SK-N-SH (cell line): ENCODE measurements at regions of chr1 and their contacts with region 1.

Region 1: DNA sequence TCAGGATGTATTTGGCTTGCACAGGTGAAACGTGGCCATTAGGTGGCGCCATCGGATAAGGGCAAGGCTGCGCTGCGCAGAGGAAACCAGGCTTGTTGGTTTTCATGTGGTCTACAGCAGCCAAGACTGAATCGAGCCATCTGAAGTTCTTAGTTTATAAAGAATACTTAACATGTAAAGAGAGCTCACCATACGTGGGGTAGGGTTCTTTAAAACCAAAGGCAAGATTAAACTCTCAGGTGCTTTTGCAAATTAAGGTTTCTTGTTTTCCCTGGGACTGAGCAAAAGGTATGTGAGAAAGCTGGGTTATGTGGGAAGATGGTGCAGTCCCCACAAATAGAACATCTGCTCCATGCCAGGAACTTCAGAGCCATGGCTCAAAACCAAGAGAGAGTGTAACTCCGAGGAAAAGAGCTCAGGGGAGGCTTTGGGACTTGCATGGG is 9.3 kb downstream of the MASP2 start:
- DNase-seq: peak; percentile 83
- H3K4me3 ChIP-seq: peak overlapping the region in 1 of 2 experiments; percentile 16; a peak in 1 of 4 replicates
- H3K27ac ChIP-seq: no peak overlapping the region
- H3K4me1 ChIP-seq: no peaks in the 10 kb centered on the region
- H3K27me3 ChIP-seq: no peaks in the 10 kb centered on the region
- CTCF ChIP-seq: peak; percentile 98
- EP300 ChIP-seq: no peak
- RAD21 ChIP-seq: peak; percentile 100

Region 2: DNA sequence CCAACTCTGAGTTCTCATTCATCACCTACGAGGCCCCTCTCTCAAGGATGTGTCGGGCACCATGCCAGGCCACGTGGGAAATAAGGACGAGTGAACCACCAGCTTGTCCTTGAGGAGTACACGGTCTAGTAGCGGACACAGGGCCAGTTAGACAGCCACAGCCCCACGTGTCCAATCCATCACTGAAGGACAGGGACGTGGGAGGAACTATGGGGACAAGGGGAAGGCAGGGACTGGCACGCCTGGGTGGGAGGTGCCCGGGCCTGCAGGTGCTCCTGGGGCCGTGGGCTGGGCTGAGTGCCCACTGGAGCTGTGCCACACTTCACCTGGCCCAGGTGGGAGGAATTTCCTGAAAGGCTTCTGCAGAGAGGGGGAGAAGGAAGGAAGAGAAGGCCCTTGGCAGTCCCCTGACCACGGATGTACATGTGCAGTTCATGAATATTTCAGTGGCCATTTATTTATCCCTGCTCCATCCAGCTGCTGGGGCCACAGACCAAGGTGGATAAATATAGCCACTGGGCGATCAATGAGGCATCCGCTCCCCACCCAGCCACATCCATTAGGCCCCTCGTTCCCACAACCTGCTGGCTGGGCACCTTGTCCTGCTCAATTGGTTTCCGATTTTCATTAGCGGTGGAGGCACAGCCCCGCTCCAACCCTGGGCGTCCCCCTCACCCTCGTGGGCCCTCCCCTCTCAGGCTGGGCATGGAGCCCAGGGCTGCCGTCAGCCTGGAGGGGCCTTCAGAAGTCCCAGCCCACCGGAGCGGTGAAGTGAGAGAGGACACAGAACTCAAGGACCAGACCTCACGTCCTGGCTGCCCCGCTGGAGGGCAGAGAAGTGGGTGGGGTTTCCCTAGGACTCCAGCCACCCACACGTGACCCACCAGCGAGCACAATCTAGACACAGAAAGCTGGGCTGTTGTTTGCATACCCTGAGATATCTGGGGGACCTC is 300.9 kb before region 1 on chr1:
- CTCF ChIA-PET with region 1: no interaction called
- POLR2A ChIA-PET with region 1: no interaction called
- DNase-seq: no peak
- H3K4me3 ChIP-seq: no peak overlapping the region
- H3K27ac ChIP-seq: no peak overlapping the region
- H3K4me1 ChIP-seq: peaks cover 0 to 12% of the 10 kb centered on the region in 2 experiments; a peak in 2 of 4 replicates
- H3K27me3 ChIP-seq: no peaks in the 10 kb centered on the region
- CTCF ChIP-seq: no peak
- EP300 ChIP-seq: no peak
- RAD21 ChIP-seq: no peak

Region 3: GRCh38 chr1:10969971-10970332 is 67.8 kb before region 1 on chr1:
- CTCF ChIA-PET with region 1: no interaction called
- POLR2A ChIA-PET with region 1: no interaction called
- DNase-seq: no peak
- H3K4me3 ChIP-seq: no peak overlapping the region
- H3K27ac ChIP-seq: no peak overlapping the region
- H3K4me1 ChIP-seq: no peaks in the 10 kb centered on the region
- H3K27me3 ChIP-seq: peaks cover 10% of the 10 kb centered on the region; the same call in 1 of the 2 replicates
- CTCF ChIP-seq: no peak
- EP300 ChIP-seq: no peak
- RAD21 ChIP-seq: no peak

Region 4: GRCh38 chr1:11019971-11020370 is 17.8 kb before region 1 on chr1:
- CTCF ChIA-PET with region 1: interaction called, 15 read pairs
- POLR2A ChIA-PET with region 1: no interaction called
- DNase-seq: no peak
- H3K4me3 ChIP-seq: no peak overlapping the region
- H3K27ac ChIP-seq: no peak overlapping the region
- H3K4me1 ChIP-seq: 0 out of 4 replicates have a peak, but pooled peaks cover 0 to 3% of the 10 kb centered on the region in 2 experiments
- H3K27me3 ChIP-seq: no peaks in the 10 kb centered on the region
- CTCF ChIP-seq: no peak
- EP300 ChIP-seq: no peak
- RAD21 ChIP-seq: no peak

Region 5: DNA sequence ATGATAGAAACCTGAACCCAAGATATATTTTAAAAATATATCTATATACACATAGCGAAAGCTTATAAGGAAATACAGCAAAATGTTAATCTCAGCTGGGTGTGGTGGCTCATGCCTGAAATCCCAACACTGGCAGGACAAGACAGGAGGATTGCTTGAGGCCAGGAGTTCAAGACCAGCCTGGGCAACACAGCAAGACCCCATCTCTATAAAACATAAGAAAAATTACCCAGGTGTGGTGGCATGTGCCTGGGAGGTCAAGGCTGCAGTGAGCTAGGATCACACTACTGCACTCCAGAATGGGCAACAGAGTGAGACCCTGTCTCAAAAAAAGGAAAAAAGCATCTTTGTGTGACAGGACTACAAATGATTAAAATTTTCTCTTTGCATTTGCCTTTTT is 28.0 kb after region 1 on chr1:
- CTCF ChIA-PET with region 1: interaction called, 49 read pairs
- POLR2A ChIA-PET with region 1: no interaction called
- DNase-seq: no peak
- H3K4me3 ChIP-seq: no peak overlapping the region
- H3K27ac ChIP-seq: no peak overlapping the region
- H3K4me1 ChIP-seq: peaks cover 4 to 5% of the 10 kb centered on the region in 2 experiments; a peak in 3 of 4 replicates
- H3K27me3 ChIP-seq: no peaks in the 10 kb centered on the region
- CTCF ChIP-seq: no peak
- EP300 ChIP-seq: no peak
- RAD21 ChIP-seq: no peak

Region 6: DNA sequence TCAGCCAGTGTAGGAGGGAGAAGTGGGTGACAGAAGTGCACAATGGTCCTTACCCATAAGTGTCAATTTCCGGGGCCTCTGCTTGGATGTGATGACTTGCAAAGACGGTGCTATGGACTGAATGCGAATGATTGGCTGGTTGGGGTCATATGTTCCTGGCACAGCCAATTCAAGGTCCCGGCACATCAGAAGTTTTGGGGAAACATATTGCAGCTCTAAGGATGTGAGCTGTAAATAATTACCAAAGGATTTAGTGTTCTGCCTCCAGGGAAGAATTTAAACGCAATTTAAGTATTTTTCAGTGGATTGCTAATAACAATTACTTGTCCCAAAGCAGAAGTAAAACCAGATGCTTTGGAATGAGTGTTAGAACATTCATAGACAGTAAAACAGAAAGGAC is 88.8 kb after region 1 on chr1:
- CTCF ChIA-PET with region 1: interaction called, 19 read pairs
- POLR2A ChIA-PET with region 1: no interaction called
- DNase-seq: no peak
- H3K4me3 ChIP-seq: no peak overlapping the region
- H3K27ac ChIP-seq: no peak overlapping the region
- H3K4me1 ChIP-seq: no peaks in the 10 kb centered on the region
- H3K27me3 ChIP-seq: no peaks in the 10 kb centered on the region
- CTCF ChIP-seq: no peak
- EP300 ChIP-seq: no peak
- RAD21 ChIP-seq: no peak

Region 7: DNA sequence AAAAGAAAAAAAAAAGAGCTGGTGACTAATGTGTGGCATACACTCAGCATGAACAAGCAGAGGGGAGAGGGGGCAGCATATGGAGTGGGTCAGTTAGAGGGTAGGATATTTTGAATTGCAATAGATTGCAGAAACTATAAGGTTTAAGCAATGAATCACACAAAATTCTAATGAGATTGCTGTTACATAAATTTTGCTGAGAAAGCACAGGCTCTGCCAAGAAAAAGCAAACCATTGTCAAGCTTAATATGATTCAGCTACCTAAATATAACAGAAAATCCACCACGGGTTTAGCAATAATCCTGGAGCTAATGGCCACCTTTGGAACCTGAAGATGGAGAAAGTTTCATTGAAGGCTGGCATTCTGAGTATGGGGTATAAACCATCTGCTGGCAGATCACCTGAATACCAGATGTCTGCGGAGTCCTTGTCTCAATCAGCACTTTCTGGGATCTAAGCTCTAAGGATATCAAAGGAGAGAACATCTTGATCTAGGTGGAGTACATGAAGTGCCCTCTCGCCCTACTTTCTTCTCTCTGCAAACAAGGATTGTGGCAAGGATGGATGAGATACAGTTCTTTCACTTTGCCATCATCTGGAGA is 121.1 kb after region 1 on chr1:
- CTCF ChIA-PET with region 1: no interaction called
- POLR2A ChIA-PET with region 1: no interaction called
- DNase-seq: no peak
- H3K4me3 ChIP-seq: no peak overlapping the region
- H3K27ac ChIP-seq: peak overlapping the region in 1 of 2 experiments; percentile 85; a peak in 2 of 4 replicates
- H3K4me1 ChIP-seq: peaks cover 5 to 19% of the 10 kb centered on the region in 2 experiments
- H3K27me3 ChIP-seq: no peaks in the 10 kb centered on the region
- CTCF ChIP-seq: no peak
- EP300 ChIP-seq: peak; percentile 29 to 80; a peak in 3 of 4 replicates
- RAD21 ChIP-seq: no peak

Region 8: GRCh38 chr1:11198851-11199594 is 161.3 kb after region 1 on chr1:
- CTCF ChIA-PET with region 1: interaction called, 18 read pairs
- POLR2A ChIA-PET with region 1: no interaction called
- DNase-seq: peak; percentile 34
- H3K4me3 ChIP-seq: no peak overlapping the region
- H3K27ac ChIP-seq: peak overlapping the region in 1 of 2 experiments; percentile 74; a peak in 2 of 4 replicates
- H3K4me1 ChIP-seq: peaks cover 0 to 10% of the 10 kb centered on the region in 2 experiments; a peak in 2 of 4 replicates
- H3K27me3 ChIP-seq: no peaks in the 10 kb centered on the region
- CTCF ChIP-seq: no peak
- EP300 ChIP-seq: no peak
- RAD21 ChIP-seq: no peak

Region 9: GRCh38 chr1:11262171-11263049 is 224.6 kb after region 1 on chr1 and contains the start of gene MTOR:
- CTCF ChIA-PET with region 1: interaction called, 24 read pairs
- POLR2A ChIA-PET with region 1: interaction called, 3 read pairs
- DNase-seq: peak; percentile 98
- H3K4me3 ChIP-seq: peak within 1 kb of the TSS; percentile 81 to 83
- H3K27ac ChIP-seq: peak within 1 kb of the TSS; percentile 65 to 85
- H3K4me1 ChIP-seq: peaks cover 0 to 2% of the 10 kb centered on the region in 2 experiments; a peak in 2 of 4 replicates
- H3K27me3 ChIP-seq: no peaks in the 10 kb centered on the region
- CTCF ChIP-seq: peak; percentile 42
- EP300 ChIP-seq: no peak; a peak in 1 of 4 replicates
- RAD21 ChIP-seq: no peak
- polyA plus RNA-seq, gene MTOR: 20.9 and 26.4 TPM in 2 replicates